Natural killer cell (primary cell): ENCODE measurements at regions of chr9 and their contacts with region 1.

Region 1: DNA sequence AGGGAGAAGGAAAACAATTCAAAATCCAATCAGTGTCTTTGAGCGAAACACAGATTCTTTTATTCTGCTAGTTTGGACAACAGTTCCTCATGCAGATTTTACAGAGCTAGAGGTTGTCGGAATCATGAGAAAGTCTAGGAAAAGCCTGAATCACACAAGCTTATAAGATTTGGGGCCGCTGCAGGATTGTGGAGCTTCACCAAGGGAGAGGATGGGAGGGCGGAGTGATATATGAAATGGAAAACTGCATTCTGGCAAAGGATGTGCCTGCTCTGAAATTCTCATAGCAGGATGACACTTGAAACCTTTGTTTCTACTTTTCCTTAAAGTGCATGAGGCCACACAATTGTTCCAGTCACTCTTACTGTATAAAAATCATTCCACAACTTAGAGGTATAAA is 134.3 kb downstream of the OR2K2 start:
- DNase-seq: no peak
- ATAC-seq: no peak
- H3K4me3 ChIP-seq: no peak overlapping the region
- H3K4me3 Mint-ChIP-seq: no peak overlapping the region
- H3K27ac ChIP-seq: no peak overlapping the region
- H3K27ac Mint-ChIP-seq: no peak overlapping the region
- H3K4me1 ChIP-seq: no peaks in the 10 kb centered on the region
- H3K4me1 Mint-ChIP-seq: no peaks in the 10 kb centered on the region
- H3K27me3 ChIP-seq: no peaks in the 10 kb centered on the region
- H3K27me3 Mint-ChIP-seq: peaks cover 0 to 4% of the 10 kb centered on the region in 2 donors
- CTCF ChIP-seq: no peak

Region 2: DNA sequence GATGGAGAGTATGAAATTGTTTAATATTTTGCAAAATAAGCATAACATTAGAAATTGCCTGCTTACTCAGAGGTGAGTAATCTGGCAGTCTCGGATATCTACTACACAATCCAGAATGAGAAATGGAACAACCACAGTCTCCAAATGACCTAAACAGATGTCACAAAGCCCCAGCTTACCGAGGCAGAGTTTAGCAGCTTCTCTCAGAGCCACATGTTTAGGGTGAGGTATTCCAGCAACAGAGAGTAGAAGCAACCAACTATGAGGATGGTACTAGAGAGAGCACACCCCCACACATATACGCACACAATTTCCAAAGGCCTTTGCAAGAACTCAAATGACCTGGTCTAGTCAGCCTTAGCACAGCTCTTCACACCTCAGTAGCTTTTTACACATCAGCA is 34.8 kb before region 1 on chr9:
- intact Hi-C with region 1: no loop called
- DNase-seq: no peak
- ATAC-seq: no peak
- H3K4me3 ChIP-seq: no peak overlapping the region
- H3K4me3 Mint-ChIP-seq: no peak overlapping the region
- H3K27ac ChIP-seq: no peak overlapping the region
- H3K27ac Mint-ChIP-seq: no peak overlapping the region
- H3K4me1 ChIP-seq: no peaks in the 10 kb centered on the region
- H3K4me1 Mint-ChIP-seq: no peaks in the 10 kb centered on the region
- H3K27me3 ChIP-seq: no peaks in the 10 kb centered on the region
- H3K27me3 Mint-ChIP-seq: no peaks in the 10 kb centered on the region
- CTCF ChIP-seq: no peak

Region 3: GRCh38 chr9:111253742-111254437 is 58.1 kb after region 1 on chr9:
- intact Hi-C with region 1: loop called (anchors 10 kb)
- DNase-seq: no peak
- ATAC-seq: no peak
- H3K4me3 ChIP-seq: no peak overlapping the region
- H3K4me3 Mint-ChIP-seq: no peak overlapping the region
- H3K27ac ChIP-seq: no peak overlapping the region
- H3K27ac Mint-ChIP-seq: no peak overlapping the region
- H3K4me1 ChIP-seq: no peaks in the 10 kb centered on the region
- H3K4me1 Mint-ChIP-seq: no peaks in the 10 kb centered on the region
- H3K27me3 ChIP-seq: no peaks in the 10 kb centered on the region
- H3K27me3 Mint-ChIP-seq: peaks cover 0 to 7% of the 10 kb centered on the region in 2 donors
- CTCF ChIP-seq: no peak

Region 4: DNA sequence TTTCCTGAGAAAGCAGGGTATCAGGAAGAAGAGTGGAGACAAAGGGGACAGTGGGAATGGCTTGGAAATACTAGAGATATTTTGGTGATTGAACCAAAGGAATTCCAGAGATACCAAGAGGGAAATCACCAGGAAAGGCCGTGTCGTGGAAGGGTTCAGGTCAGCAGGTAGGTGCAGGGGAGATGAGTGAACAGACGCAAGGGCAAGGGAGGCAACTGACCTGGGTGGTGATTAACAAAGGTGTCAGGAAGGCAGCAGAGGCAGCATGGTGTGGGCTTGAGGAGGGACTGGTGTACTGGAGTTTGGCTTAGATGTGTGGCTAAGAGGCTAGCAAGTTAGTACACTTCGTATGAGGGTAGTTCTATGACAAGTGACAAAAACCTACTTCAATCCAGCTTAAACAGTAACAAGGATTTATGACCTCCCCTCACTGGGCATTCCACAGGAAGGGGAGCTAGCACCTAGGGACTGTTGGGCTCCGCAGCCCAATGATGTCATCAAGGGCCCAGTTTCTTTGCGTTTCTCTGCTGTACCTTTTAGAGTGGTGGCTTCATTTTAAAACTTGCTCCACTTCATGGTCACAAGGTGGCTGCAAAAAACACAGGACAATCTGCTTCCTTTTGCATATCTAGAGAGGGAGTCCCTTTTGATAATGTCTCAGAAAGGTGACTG is 1485.1 kb after region 1 on chr9:
- intact Hi-C with region 1: no loop called
- DNase-seq: no peak
- ATAC-seq: no peak
- H3K4me3 ChIP-seq: no peak overlapping the region
- H3K4me3 Mint-ChIP-seq: no peak overlapping the region
- H3K27ac ChIP-seq: no peak overlapping the region
- H3K27ac Mint-ChIP-seq: no peak overlapping the region
- H3K4me1 ChIP-seq: no peaks in the 10 kb centered on the region
- H3K4me1 Mint-ChIP-seq: peaks cover 0 to 5% of the 10 kb centered on the region in 2 donors
- H3K27me3 ChIP-seq: no peaks in the 10 kb centered on the region
- H3K27me3 Mint-ChIP-seq: peaks cover 0 to 6% of the 10 kb centered on the region in 2 donors
- CTCF ChIP-seq: no peak